Natural killer cell (primary cell): ENCODE measurements at regions of chr3 and their contacts with region 1.

Region 1: GRCh38 chr3:141231101-141231935 is at the start of gene PXYLP1:
- DNase-seq: peak; percentile 93 to 95
- ATAC-seq: peak; percentile 92 to 98 (median 95)
- H3K4me3 ChIP-seq: peak within 1 kb of the TSS; percentile 80
- H3K4me3 Mint-ChIP-seq: peak within 1 kb of the TSS; percentile 98
- H3K27ac ChIP-seq: peak within 1 kb of the TSS; percentile 69
- H3K27ac Mint-ChIP-seq: peak within 1 kb of the TSS; percentile 92 to 97
- H3K4me1 ChIP-seq: peaks cover 43% of the 10 kb centered on the region
- H3K4me1 Mint-ChIP-seq: peaks cover 58 to 61% of the 10 kb centered on the region in 2 donors
- H3K27me3 ChIP-seq: no peaks in the 10 kb centered on the region
- H3K27me3 Mint-ChIP-seq: no peaks in the 10 kb centered on the region
- CTCF ChIP-seq: peak; percentile 69
- total RNA-seq, gene PXYLP1: 13.0 to 32.4 (median 21.7) TPM

Region 2: GRCh38 chr3:141174674-141175073 is 56.6 kb before region 1 on chr3:
- intact Hi-C with region 1: no loop called
- DNase-seq: no peak
- ATAC-seq: no peak
- H3K4me3 ChIP-seq: no peak overlapping the region
- H3K4me3 Mint-ChIP-seq: no peak overlapping the region
- H3K27ac ChIP-seq: no peak overlapping the region
- H3K27ac Mint-ChIP-seq: no peak overlapping the region
- H3K4me1 ChIP-seq: no peaks in the 10 kb centered on the region
- H3K4me1 Mint-ChIP-seq: no peaks in the 10 kb centered on the region
- H3K27me3 ChIP-seq: peaks cover 3% of the 10 kb centered on the region
- H3K27me3 Mint-ChIP-seq: peaks cover 21 to 34% of the 10 kb centered on the region in 2 donors
- CTCF ChIP-seq: no peak

Region 3: GRCh38 chr3:141279077-141279967 is 48.0 kb after region 1 on chr3:
- intact Hi-C with region 1: loop called (anchors 1 kb)
- DNase-seq: peak in 1 of 2 donors; percentile 64
- ATAC-seq: peak; percentile 42 to 77 (median 75)
- H3K4me3 ChIP-seq: no peak overlapping the region
- H3K4me3 Mint-ChIP-seq: no peak overlapping the region
- H3K27ac ChIP-seq: no peak overlapping the region
- H3K27ac Mint-ChIP-seq: no peak overlapping the region
- H3K4me1 ChIP-seq: peaks cover 22% of the 10 kb centered on the region
- H3K4me1 Mint-ChIP-seq: peaks cover 18 to 20% of the 10 kb centered on the region in 2 donors
- H3K27me3 ChIP-seq: no peaks in the 10 kb centered on the region
- H3K27me3 Mint-ChIP-seq: no peaks in the 10 kb centered on the region
- CTCF ChIP-seq: peak; percentile 60